Gastrocnemius medialis (tissue), 4 donors: ENCODE measurements at regions of chr17 and their contacts with region 1.

Region 1: DNA sequence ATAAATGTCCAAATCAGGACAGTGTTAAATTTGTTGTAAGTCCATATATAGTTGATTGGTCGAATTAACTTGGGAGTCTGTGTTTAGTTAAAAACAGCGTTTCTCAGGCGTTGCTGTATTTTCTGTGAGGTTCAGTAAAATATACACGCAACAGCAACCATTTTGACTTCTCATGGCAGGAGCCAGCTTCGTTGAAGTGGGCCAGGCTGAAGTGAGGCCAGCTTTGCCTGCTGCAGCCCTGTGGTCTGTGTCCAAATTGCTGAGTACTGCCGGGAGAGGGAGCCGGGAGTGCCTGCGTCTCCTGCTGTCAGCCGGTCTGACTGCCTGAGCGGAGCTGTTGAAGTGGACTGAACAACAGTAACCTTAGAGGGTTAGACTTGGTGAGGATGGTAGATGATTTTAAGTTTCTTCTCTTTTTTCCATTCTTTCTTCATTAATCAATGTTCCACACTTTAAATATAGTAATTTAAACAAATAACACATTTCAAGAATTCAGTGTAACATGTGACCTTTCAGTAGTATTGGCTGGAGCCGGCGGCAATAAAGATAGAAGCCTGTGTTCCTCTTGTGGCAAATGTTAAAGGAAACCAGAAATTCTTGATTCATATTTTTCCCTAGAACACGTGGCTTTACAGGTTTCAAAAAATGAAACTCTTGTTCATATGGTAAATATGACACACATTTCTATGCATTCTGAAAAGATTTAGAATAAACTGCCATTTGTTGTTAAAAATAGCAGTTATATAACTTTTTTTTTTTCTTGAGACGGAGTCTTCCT is 37.0 kb upstream of the ZNF750 start:
- DNase-seq: peak; percentile 86 to 93
- ATAC-seq: peak; percentile 91
- H3K4me3 ChIP-seq: peak overlapping the region in 3 of 4 donors; percentile 12 to 33 (median 22)
- H3K27ac ChIP-seq: peak overlapping the region; percentile 77 to 89 (median 82)
- H3K4me1 ChIP-seq: peaks cover 19 to 42% of the 10 kb centered on the region in 2 donors
- H3K27me3 ChIP-seq: no peaks in the 10 kb centered on the region
- CTCF ChIP-seq: peak; percentile 21 to 61 (median 52)
- POLR2A ChIP-seq: peak; percentile 25 to 38

Region 2: GRCh38 chr17:82787081-82787848 is 89.5 kb before region 1 on chr17:
- in situ Hi-C with region 1: no loop called
- intact Hi-C with region 1: loop called (anchors 1 kb)
- DNase-seq: peak; percentile 92 to 97
- ATAC-seq: peak; percentile 89 to 90
- H3K4me3 ChIP-seq: no peak overlapping the region
- H3K27ac ChIP-seq: peak overlapping the region; percentile 82 to 90 (median 85)
- H3K4me1 ChIP-seq: peaks cover 28 to 32% of the 10 kb centered on the region in 2 donors
- H3K27me3 ChIP-seq: no peaks in the 10 kb centered on the region
- CTCF ChIP-seq: no peak
- POLR2A ChIP-seq: peak; percentile 71

Region 3: GRCh38 chr17:82804442-82805191 is 72.2 kb before region 1 on chr17:
- in situ Hi-C with region 1: no loop called
- intact Hi-C with region 1: loop called (anchors 2 kb)
- DNase-seq: peak; percentile 92 to 98
- ATAC-seq: peak; percentile 97 to 98
- H3K4me3 ChIP-seq: peak overlapping the region in 2 of 4 donors; percentile 3 to 14
- H3K27ac ChIP-seq: peak overlapping the region; percentile 83 to 92 (median 88)
- H3K4me1 ChIP-seq: peaks cover 16 to 22% of the 10 kb centered on the region in 2 donors
- H3K27me3 ChIP-seq: no peaks in the 10 kb centered on the region
- CTCF ChIP-seq: peak in 1 of 5 experiments; percentile 13
- POLR2A ChIP-seq: peak in 1 of 2 donors; percentile 24

Region 4: DNA sequence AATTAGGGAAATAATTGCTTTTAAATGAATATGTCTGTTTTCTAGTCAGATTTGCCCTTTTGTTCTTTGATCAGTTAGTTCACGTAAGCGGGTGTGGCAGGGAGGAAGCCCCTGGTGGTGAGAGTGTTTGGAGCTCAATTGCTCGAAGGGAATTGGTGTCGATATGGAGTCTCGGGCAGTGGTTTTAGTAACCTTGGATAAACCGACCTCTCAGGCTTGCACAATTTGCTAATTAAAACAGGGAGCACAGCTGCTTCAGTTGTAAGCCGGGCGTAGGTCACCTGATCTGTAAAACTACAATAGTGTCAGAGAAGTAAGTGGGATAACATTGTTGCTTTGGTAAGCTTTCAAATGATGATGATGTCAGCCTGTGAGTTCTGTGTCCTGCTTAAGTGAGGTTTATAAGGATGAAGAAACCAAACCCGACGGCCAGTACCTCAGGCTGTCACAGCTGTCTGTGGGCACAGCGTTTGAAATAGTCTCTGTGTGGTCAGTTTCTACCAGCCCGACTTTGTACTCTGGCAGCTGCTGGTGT is 39.9 kb before region 1 on chr17:
- in situ Hi-C with region 1: no loop called
- intact Hi-C with region 1: loop called (anchors 2 kb)
- DNase-seq: peak; percentile 32 to 66
- ATAC-seq: peak; percentile 61 to 68
- H3K4me3 ChIP-seq: no peak overlapping the region
- H3K27ac ChIP-seq: peak overlapping the region; percentile 64 to 88 (median 84)
- H3K4me1 ChIP-seq: peaks cover 22 to 33% of the 10 kb centered on the region in 2 donors
- H3K27me3 ChIP-seq: no peaks in the 10 kb centered on the region
- CTCF ChIP-seq: peak in 4 of 5 experiments; percentile 15 to 37 (median 32)
- POLR2A ChIP-seq: peak in 1 of 2 donors; percentile 53

Region 5: GRCh38 chr17:82887255-82888164 is 10.7 kb after region 1 on chr17:
- in situ Hi-C with region 1: no loop called
- intact Hi-C with region 1: loop called (anchors 1 kb)
- DNase-seq: no peak
- ATAC-seq: peak in 1 of 2 donors; percentile 13
- H3K4me3 ChIP-seq: no peak overlapping the region
- H3K27ac ChIP-seq: peak overlapping the region; percentile 77 to 82 (median 80)
- H3K4me1 ChIP-seq: peaks cover 27 to 29% of the 10 kb centered on the region in 2 donors
- H3K27me3 ChIP-seq: no peaks in the 10 kb centered on the region
- CTCF ChIP-seq: no peak
- POLR2A ChIP-seq: no peak

Region 6: DNA sequence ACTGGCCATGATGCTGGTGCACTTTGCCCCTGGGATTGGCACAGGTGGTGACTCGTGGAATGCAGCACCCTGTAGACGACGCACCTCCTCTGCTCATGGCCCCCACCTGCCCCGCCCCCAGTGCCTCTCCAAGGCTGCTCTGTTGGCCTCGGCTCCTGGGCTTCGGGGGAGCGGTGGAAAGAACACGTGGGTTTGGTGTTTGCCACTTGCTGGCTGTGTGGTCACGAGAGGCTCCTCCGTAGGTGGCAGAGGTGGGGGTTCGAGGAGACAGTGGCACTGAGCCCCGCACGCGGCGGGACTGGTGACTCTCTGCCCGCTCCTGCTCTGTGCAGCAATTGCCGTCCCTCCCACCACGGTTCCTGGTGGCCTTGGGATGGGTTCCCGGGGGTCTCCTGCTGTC is 45.9 kb after region 1 on chr17:
- in situ Hi-C with region 1: no loop called
- intact Hi-C with region 1: no loop called
- DNase-seq: no peak
- ATAC-seq: no peak
- H3K4me3 ChIP-seq: no peak overlapping the region
- H3K27ac ChIP-seq: no peak overlapping the region
- H3K4me1 ChIP-seq: peaks cover 0 to 3% of the 10 kb centered on the region in 2 donors
- H3K27me3 ChIP-seq: no peaks in the 10 kb centered on the region
- CTCF ChIP-seq: no peak
- POLR2A ChIP-seq: no peak